Mammary epithelial cell (primary cell): ENCODE measurements at regions of chr15 and their contacts with region 1.

Region 1: DNA sequence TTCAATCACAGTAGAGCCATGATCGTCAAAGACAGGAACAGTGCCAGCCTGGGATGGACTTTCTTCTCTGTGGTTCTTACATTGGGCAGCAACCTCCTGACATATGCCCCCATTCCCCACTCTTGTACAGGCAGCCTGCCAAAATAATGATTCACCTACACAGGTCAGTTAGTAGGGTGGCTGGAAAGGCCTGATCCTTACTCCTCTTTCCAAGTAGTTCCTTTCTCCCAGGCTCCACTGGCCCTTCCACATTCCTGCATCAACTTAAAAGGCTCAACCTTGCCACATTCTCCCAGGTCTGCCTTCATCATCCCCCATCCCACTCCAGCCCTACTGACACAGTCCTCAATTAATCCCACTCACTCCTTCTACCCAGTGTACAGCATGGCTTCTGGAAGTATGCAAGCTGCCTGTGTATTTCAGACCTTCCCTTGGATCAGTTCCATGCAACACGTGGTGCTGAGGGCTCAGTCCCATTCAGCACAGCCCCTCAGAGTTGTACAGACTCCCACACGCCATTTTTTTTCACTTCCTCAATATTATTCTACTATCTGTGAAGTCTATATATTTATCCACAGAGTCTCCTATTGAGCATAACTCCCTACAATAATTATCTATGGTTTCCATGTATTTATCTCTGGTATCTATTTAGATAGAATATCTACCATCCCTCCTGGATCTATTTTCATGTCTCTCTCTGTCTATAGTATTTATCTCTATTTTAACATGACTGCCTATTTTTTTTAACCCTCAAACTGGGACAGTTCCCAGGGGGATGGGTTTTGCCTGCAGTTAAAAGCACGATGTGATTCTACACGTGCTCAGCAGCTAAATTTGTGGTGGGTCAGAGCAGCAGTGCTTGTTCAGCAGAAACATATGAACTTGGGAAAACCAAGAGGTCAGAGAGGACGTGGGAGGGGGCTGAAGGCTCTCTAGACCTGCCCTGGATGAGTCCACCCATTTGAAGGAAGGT is 189.5 kb downstream of the NTRK3 start:
- DNase-seq: no peak
- H3K4me3 ChIP-seq: no peak overlapping the region
- H3K27ac ChIP-seq: no peak overlapping the region
- H3K4me1 ChIP-seq: no peaks in the 10 kb centered on the region
- H3K27me3 ChIP-seq: no peaks in the 10 kb centered on the region
- CTCF ChIP-seq: no peak

Region 2: GRCh38 chr15:88131935-88132334 is 64.9 kb after region 1 on chr15:
- CTCF ChIA-PET with region 1: no interaction called
- dilution Hi-C with region 1: loop called (anchors 5 kb)
- in situ Hi-C with region 1: no loop called
- intact Hi-C with region 1: no loop called
- DNase-seq: peak; percentile 40
- H3K4me3 ChIP-seq: no peak overlapping the region
- H3K27ac ChIP-seq: no peak overlapping the region
- H3K4me1 ChIP-seq: no peaks in the 10 kb centered on the region
- H3K27me3 ChIP-seq: no peaks in the 10 kb centered on the region
- CTCF ChIP-seq: no peak